Activated CD8-positive, alpha-beta T cell treated with anti-CD3 and anti-CD28 coated beads for 36 hours (primary cell): ENCODE measurements at regions of chr20 and their contacts with region 1.

Region 1: DNA sequence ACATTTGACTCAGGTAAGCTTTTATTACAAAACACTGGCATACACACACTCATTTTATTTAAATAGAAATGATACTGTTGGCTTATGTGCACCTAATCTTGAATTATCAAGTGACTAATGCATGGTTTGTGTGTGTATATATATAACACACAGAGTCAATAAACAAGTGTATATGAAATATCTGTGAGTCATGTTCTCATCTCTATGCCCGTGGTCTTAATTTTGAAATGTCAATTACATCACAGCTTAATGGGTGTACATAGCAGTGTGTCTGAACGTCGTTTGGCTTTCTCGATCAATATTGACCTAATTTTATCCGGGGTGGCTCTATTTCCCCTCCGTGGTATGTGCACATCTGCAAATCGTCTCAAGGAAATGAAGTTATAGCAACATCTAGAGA is 104.0 kb upstream of the ZFP64 start:
- DNase-seq: no peak
- ATAC-seq: no peak
- H3K4me3 Mint-ChIP-seq: no peak overlapping the region
- H3K27ac Mint-ChIP-seq: no peak overlapping the region
- H3K4me1 Mint-ChIP-seq: no peaks in the 10 kb centered on the region
- H3K27me3 Mint-ChIP-seq: no peaks in the 10 kb centered on the region
- CTCF ChIP-seq: no peak

Region 2: GRCh38 chr20:52015155-52015554 is 280.4 kb before region 1 on chr20:
- CTCF ChIA-PET with region 1: no interaction called
- POLR2A ChIA-PET with region 1: no interaction called
- intact Hi-C with region 1: no loop called
- DNase-seq: no peak
- ATAC-seq: no peak
- H3K4me3 Mint-ChIP-seq: no peak overlapping the region
- H3K27ac Mint-ChIP-seq: no peak overlapping the region
- H3K4me1 Mint-ChIP-seq: no peaks in the 10 kb centered on the region
- H3K27me3 Mint-ChIP-seq: no peaks in the 10 kb centered on the region
- CTCF ChIP-seq: no peak

Region 3: DNA sequence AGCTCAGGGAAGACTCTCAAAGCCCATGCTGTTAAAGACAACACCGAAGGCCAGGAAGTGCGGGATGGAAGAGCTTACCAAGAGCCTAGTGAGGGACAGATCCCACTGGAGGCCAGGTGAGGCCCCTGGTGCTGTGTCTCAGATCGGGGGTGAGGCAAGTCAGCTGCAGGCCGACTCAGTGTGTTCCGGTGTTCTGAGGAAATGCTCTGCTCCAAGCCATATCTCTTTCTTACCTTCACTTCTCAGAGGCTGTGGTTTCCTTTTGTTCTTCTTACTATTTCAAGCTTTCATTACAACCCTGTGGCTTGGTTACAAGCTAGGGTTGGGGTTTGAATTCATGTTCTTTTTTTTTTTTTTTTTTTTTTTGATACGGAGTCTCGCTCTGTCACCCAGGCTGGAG is 10.3 kb after region 1 on chr20:
- CTCF ChIA-PET with region 1: interaction called, 11 read pairs
- POLR2A ChIA-PET with region 1: no interaction called
- intact Hi-C with region 1: no loop called
- DNase-seq: peak; percentile 48
- ATAC-seq: peak; percentile 85
- H3K4me3 Mint-ChIP-seq: no peak overlapping the region
- H3K27ac Mint-ChIP-seq: peak overlapping the region; percentile 11
- H3K4me1 Mint-ChIP-seq: peaks cover 35% of the 10 kb centered on the region
- H3K27me3 Mint-ChIP-seq: no peaks in the 10 kb centered on the region
- CTCF ChIP-seq: no peak